ENCODE measurements at regions of chr14 and their contacts with region 1.

Region 1: GRCh38 chr14:54175298-54175942 is 218.8 kb upstream of the BMP4 start:
- DNase-seq: peak; percentile 91
- H3K4me3 ChIP-seq: no peak overlapping the region
- H3K27ac ChIP-seq: no peak overlapping the region
- H3K4me1 ChIP-seq: peaks cover 36% of the 10 kb centered on the region
- H3K27me3 ChIP-seq: no peaks in the 10 kb centered on the region
- CTCF ChIP-seq: peak; percentile 57 to 62
- POLR2A ChIP-seq: no peak

Region 2: GRCh38 chr14:53295985-53296582 is 879.3 kb before region 1 on chr14:
- CTCF ChIA-PET with region 1: no interaction called
- POLR2A ChIA-PET with region 1: no interaction called
- dilution Hi-C with region 1: no loop called
- intact Hi-C with region 1: loop called (anchors 5 kb)
- DNase-seq: peak; percentile 48
- H3K4me3 ChIP-seq: no peak overlapping the region
- H3K27ac ChIP-seq: no peak overlapping the region
- H3K4me1 ChIP-seq: no peaks in the 10 kb centered on the region
- H3K27me3 ChIP-seq: peaks cover 0 to 2% of the 10 kb centered on the region in 2 experiments
- CTCF ChIP-seq: peak; percentile 41 to 45
- POLR2A ChIP-seq: no peak

Region 3: DNA sequence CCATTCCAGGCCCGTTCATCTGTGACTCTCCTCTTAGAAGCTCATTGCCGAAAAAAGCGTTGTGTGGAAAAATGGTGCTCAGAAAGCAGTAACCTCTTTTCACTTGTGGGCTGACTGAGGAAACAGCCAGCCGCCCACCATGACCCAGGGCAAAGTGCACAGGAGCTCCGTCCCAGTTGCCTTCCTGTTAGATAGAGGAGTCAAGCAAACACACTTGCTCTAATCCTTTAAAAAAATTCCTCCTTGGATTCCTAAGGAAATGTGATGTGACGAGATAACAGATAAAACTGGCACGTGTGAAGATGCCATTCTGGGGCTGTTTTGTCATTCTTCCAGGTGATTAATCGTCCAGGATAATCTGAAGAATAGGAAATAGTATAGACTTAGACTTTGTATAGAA is 625.5 kb before region 1 on chr14:
- CTCF ChIA-PET with region 1: interaction called, 13 read pairs
- POLR2A ChIA-PET with region 1: no interaction called
- dilution Hi-C with region 1: no loop called
- intact Hi-C with region 1: no loop called
- DNase-seq: peak; percentile 96
- H3K4me3 ChIP-seq: peak overlapping the region in 1 of 3 experiments; percentile 15
- H3K27ac ChIP-seq: peak overlapping the region; percentile 89
- H3K4me1 ChIP-seq: peaks cover 19% of the 10 kb centered on the region
- H3K27me3 ChIP-seq: no peaks in the 10 kb centered on the region
- CTCF ChIP-seq: no peak
- POLR2A ChIP-seq: peak; percentile 79

Region 4: GRCh38 chr14:53963320-53964227 is 211.8 kb before region 1 on chr14:
- CTCF ChIA-PET with region 1: interaction called, 164 read pairs
- POLR2A ChIA-PET with region 1: no interaction called
- dilution Hi-C with region 1: no loop called
- intact Hi-C with region 1: no loop called
- DNase-seq: peak; percentile 44
- H3K4me3 ChIP-seq: peak overlapping the region in 2 of 3 experiments; percentile 0 to 35
- H3K27ac ChIP-seq: no peak overlapping the region
- H3K4me1 ChIP-seq: peaks cover 4% of the 10 kb centered on the region
- H3K27me3 ChIP-seq: peaks cover 0 to 3% of the 10 kb centered on the region in 2 experiments
- CTCF ChIP-seq: peak; percentile 44 to 60
- POLR2A ChIP-seq: no peak

Region 5: GRCh38 chr14:54108481-54109471 is 66.6 kb before region 1 on chr14:
- CTCF ChIA-PET with region 1: interaction called, 12 read pairs
- POLR2A ChIA-PET with region 1: no interaction called
- dilution Hi-C with region 1: no loop called
- intact Hi-C with region 1: no loop called
- DNase-seq: peak; percentile 94
- H3K4me3 ChIP-seq: peak overlapping the region in 1 of 3 experiments; percentile 17
- H3K27ac ChIP-seq: peak overlapping the region; percentile 96
- H3K4me1 ChIP-seq: peaks cover 44% of the 10 kb centered on the region
- H3K27me3 ChIP-seq: no peaks in the 10 kb centered on the region
- CTCF ChIP-seq: no peak
- POLR2A ChIP-seq: no peak

Region 6: GRCh38 chr14:54322676-54323337 is 147.4 kb after region 1 on chr14:
- CTCF ChIA-PET with region 1: interaction called, 12 read pairs
- POLR2A ChIA-PET with region 1: no interaction called
- dilution Hi-C with region 1: no loop called
- intact Hi-C with region 1: no loop called
- DNase-seq: no peak
- H3K4me3 ChIP-seq: no peak overlapping the region
- H3K27ac ChIP-seq: no peak overlapping the region
- H3K4me1 ChIP-seq: peaks cover 14% of the 10 kb centered on the region
- H3K27me3 ChIP-seq: no peaks in the 10 kb centered on the region
- CTCF ChIP-seq: no peak
- POLR2A ChIP-seq: no peak

Region 7: GRCh38 chr14:54503476-54504257 is 328.2 kb after region 1 on chr14:
- CTCF ChIA-PET with region 1: no interaction called
- POLR2A ChIA-PET with region 1: no interaction called
- dilution Hi-C with region 1: no loop called
- intact Hi-C with region 1: no loop called
- DNase-seq: peak; percentile 37
- H3K4me3 ChIP-seq: no peak overlapping the region
- H3K27ac ChIP-seq: no peak overlapping the region
- H3K4me1 ChIP-seq: no peaks in the 10 kb centered on the region
- H3K27me3 ChIP-seq: peaks cover 0 to 8% of the 10 kb centered on the region in 2 experiments
- CTCF ChIP-seq: peak; percentile 39 to 43
- POLR2A ChIP-seq: no peak